AG04449 (cell line): ENCODE measurements at regions of chr6 and their contacts with region 1.

Region 1: GRCh38 chr6:159720708-159721107 is 6.6 kb upstream of the WTAP start:
- DNase-seq: no peak
- H3K4me3 ChIP-seq: no peak overlapping the region
- CTCF ChIP-seq: peak; percentile 18

Region 2: GRCh38 chr6:159701411-159701999 is 19.2 kb before region 1 on chr6:
- CTCF ChIA-PET with region 1: interaction called, 11 read pairs
- POLR2A ChIA-PET with region 1: interaction called, 7 read pairs
- DNase-seq: peak; percentile 83
- H3K4me3 ChIP-seq: no peak overlapping the region
- CTCF ChIP-seq: no peak